ENCODE measurements at regions of chr17 and their contacts with region 1.

Region 1: GRCh38 chr17:43367737-43368242 is 31.0 kb upstream of the ARL4D start:
- DNase-seq: no peak
- ATAC-seq: peak; percentile 48
- H3K4me3 ChIP-seq: no peak overlapping the region
- H3K27ac ChIP-seq: peak overlapping the region; percentile 58 to 90
- H3K4me1 ChIP-seq: no peaks in the 10 kb centered on the region
- H3K27me3 ChIP-seq: no peaks in the 10 kb centered on the region

Region 2: DNA sequence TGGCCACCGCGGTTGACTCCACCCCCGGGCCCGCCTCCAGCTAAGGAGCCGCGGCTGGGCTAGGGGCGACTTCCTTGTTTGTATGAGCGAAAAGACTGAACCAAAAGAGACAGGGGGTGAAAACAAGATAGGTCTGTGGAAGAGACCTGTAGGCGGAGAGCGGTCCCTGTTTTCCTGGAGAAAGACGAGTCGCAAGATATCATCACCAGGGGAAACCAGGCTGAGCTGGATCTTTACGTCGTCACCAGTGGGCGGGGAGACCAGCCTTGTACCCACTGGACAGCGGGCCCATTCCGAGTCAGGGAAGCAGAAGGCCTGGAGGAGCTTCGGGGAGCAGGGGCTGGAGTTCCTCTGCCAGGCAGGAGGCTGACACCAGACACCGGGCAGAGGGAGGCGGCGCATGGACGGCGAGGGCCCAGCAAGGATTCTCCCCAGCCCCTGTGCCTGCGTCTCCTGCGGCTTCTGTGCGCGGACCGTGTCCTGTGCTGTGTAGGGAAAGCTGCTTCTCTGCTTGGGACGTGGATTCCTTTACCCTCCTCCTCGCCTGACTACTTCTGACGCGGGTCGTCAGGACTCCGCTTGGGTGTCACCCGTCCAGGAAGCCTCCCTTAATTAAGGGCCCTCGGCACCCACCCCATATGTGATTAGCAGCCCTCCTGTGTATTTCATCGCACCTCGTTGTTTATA is 20.7 kb after region 1 on chr17:
- intact Hi-C with region 1: loop called in 1 of 2 experiments (anchors 1 kb)
- DNase-seq: peak; percentile 96
- ATAC-seq: peak; percentile 94
- H3K4me3 ChIP-seq: peak overlapping the region; percentile 38 to 46
- H3K27ac ChIP-seq: peak overlapping the region; percentile 94 to 97
- H3K4me1 ChIP-seq: no peaks in the 10 kb centered on the region
- H3K27me3 ChIP-seq: no peaks in the 10 kb centered on the region